ENCODE measurements at regions of chr17 and their contacts with region 1.

Region 1: GRCh38 chr17:49567871-49568694 is 7.6 kb upstream of the NXPH3 start:
- H3K4me3 ChIP-seq: no peak overlapping the region
- H3K27ac ChIP-seq: no peak overlapping the region
- H3K4me1 ChIP-seq: peaks cover 3% of the 10 kb centered on the region
- CTCF ChIP-seq: peak; percentile 97

Region 2: DNA sequence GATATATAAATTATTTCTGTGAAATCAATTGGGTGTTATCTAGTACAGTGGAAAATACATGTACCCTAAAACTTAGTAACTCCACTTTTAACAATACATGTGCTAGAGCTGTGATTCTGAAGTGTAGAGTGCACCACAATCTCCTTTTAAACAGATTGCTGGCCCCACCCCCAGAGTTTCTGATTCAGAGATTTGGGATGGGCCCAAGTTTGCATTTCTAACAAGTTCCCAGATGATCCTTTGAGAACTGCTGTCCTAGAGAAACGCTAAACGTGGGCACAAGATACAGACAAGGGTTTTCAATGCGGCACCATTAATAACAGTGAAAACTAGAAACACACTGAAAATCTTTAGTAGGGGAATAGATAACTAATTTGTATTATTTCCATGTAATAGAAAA is 56.8 kb after region 1 on chr17:
- CTCF ChIA-PET with region 1: interaction called, 10 read pairs
- POLR2A ChIA-PET with region 1: no interaction called
- H3K4me3 ChIP-seq: no peak overlapping the region
- H3K27ac ChIP-seq: no peak overlapping the region
- H3K4me1 ChIP-seq: no peaks in the 10 kb centered on the region
- CTCF ChIP-seq: no peak

Region 3: GRCh38 chr17:49677933-49678847 is 110.1 kb after region 1 on chr17 and contains the start of gene SPOP:
- CTCF ChIA-PET with region 1: interaction called, 11 read pairs
- POLR2A ChIA-PET with region 1: no interaction called
- H3K4me3 ChIP-seq: peak within 1 kb of the TSS; percentile 78
- H3K27ac ChIP-seq: peak within 1 kb of the TSS; percentile 70
- H3K4me1 ChIP-seq: peaks cover 15% of the 10 kb centered on the region; the same call in 1 of the 2 replicates
- CTCF ChIP-seq: no peak

Region 4: DNA sequence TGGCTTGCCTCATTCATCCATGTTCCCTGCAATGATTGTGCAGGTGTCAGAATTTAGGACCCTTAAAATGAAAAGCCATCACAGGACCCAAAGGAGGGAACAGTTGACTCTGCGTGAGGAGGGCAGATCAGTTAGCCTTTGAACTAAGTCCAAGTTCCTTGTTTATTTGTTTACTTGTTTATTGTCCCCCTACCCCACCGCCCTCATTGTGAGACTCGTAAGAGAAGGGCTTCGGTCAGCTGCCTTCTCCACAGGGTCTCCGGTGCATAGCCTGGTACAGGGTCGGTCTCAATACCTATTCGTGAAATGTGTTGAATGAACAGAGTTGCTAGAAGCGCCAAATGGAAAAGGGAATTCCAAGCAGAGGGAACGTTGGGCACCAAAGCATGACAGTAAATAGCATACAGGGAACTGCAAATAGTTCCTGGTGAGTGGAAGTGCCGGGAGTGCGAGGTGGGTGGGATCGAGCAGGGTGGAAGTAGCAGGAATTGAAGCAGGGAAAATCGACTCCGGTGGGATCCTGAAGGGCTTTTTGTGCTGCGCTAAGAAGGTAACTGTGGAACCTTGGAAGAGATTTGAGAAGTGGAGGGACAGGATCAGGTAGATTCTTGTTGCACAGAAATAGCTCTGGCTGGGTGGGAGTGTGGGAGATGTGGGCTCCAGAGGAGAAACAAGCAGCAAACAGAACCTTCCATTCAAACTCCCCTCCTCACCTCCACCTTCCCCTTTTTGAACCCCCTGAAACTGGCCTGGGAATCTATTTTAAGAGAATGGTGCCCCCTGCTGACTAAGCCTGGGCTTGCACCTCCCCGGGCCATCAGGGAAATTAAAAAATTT is 127.0 kb after region 1 on chr17:
- CTCF ChIA-PET with region 1: interaction called, 486 read pairs
- POLR2A ChIA-PET with region 1: interaction called, 10 read pairs
- H3K4me3 ChIP-seq: no peak overlapping the region
- H3K27ac ChIP-seq: no peak overlapping the region
- H3K4me1 ChIP-seq: no peaks in the 10 kb centered on the region
- CTCF ChIP-seq: peak; percentile 48

Region 5: GRCh38 chr17:49707608-49708514 is 139.8 kb after region 1 on chr17 and contains the start of gene SLC35B1:
- CTCF ChIA-PET with region 1: interaction called, 486 read pairs
- POLR2A ChIA-PET with region 1: interaction called, 9 read pairs
- H3K4me3 ChIP-seq: peak within 1 kb of the TSS; percentile 88
- H3K27ac ChIP-seq: peak within 1 kb of the TSS; percentile 93
- H3K4me1 ChIP-seq: no peaks in the 10 kb centered on the region
- CTCF ChIP-seq: peak; percentile 99

Region 6: GRCh38 chr17:49779739-49780231 is 211.7 kb after region 1 on chr17:
- CTCF ChIA-PET with region 1: interaction called, 11 read pairs
- POLR2A ChIA-PET with region 1: no interaction called
- H3K4me3 ChIP-seq: no peak overlapping the region
- H3K27ac ChIP-seq: no peak overlapping the region
- H3K4me1 ChIP-seq: no peaks in the 10 kb centered on the region
- CTCF ChIP-seq: peak; percentile 67

Region 7: DNA sequence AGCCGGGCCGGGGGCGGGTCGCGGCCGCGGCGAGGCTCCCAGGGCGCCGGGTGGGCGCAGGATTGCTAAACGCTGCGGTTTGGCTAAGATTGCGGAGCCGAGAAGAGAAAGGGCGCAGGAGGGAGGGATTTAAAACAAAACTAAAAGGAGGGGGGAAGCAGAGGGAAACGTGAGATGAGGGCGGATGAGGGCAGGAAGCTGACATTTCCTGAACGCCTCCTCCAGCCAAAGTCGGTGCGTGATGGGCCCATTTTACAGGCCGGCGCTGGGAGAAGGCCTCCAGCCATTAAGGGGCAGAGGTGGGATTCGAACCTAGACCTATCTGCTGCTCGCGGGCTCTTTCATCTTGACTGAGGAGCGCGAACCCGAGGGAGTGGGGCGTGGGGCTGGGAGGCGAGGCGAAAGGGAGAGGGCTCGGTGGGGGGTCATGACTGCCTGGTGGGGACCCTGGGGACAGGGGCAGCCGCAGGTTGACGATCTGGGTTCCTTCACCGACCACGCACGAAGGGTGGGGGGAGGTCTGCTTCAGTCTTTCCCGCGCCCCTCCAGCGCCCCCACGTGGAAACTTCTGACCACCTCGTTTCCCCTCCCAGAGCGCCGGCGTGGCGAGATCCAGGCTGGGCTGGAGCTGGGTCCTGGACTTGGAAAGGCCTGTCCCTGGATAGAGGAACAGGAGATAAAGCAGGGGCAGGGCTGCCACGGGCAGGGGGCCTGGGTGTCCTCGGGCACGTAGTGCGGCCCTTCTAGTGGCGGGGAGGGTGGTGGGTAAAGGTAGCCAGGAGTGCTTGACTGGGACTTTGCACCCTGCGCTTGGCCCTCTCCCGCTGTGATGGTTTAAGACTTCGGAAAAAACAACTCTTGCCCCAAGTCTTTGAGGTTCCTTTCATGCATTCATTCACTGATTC is 283.6 kb after region 1 on chr17:
- CTCF ChIA-PET with region 1: interaction called, 16 read pairs
- POLR2A ChIA-PET with region 1: no interaction called
- H3K4me3 ChIP-seq: peak overlapping the region; percentile 27
- H3K27ac ChIP-seq: peak overlapping the region; percentile 12; the same call in 1 of the 2 replicates
- H3K4me1 ChIP-seq: peaks cover 5% of the 10 kb centered on the region; the same call in 1 of the 2 replicates
- CTCF ChIP-seq: peak; percentile 85